Activated naive CD4-positive, alpha-beta T cell treated with anti-CD3 and anti-CD28 coated beads for 36 hours (primary cell): ENCODE measurements at regions of chr4 and their contacts with region 1.

Region 1: GRCh38 chr4:87220094-87220822 is at the start of gene KLHL8:
- DNase-seq: peak; percentile 85
- H3K4me3 Mint-ChIP-seq: peak within 1 kb of the TSS; percentile 84
- H3K27ac Mint-ChIP-seq: peak within 1 kb of the TSS; percentile 82
- H3K4me1 Mint-ChIP-seq: peaks cover 16% of the 10 kb centered on the region
- H3K27me3 Mint-ChIP-seq: no peaks in the 10 kb centered on the region
- total RNA-seq, gene KLHL8: 10.7 to 12.1 TPM

Region 2: GRCh38 chr4:87209696-87210095 is 10.6 kb before region 1 on chr4:
- CTCF ChIA-PET with region 1: interaction called, 3 read pairs
- intact Hi-C with region 1: loop called (anchors 1 kb)
- DNase-seq: peak; percentile 63
- H3K4me3 Mint-ChIP-seq: peak overlapping the region; percentile 42
- H3K27ac Mint-ChIP-seq: no peak overlapping the region
- H3K4me1 Mint-ChIP-seq: peaks cover 23% of the 10 kb centered on the region
- H3K27me3 Mint-ChIP-seq: no peaks in the 10 kb centered on the region

Region 3: DNA sequence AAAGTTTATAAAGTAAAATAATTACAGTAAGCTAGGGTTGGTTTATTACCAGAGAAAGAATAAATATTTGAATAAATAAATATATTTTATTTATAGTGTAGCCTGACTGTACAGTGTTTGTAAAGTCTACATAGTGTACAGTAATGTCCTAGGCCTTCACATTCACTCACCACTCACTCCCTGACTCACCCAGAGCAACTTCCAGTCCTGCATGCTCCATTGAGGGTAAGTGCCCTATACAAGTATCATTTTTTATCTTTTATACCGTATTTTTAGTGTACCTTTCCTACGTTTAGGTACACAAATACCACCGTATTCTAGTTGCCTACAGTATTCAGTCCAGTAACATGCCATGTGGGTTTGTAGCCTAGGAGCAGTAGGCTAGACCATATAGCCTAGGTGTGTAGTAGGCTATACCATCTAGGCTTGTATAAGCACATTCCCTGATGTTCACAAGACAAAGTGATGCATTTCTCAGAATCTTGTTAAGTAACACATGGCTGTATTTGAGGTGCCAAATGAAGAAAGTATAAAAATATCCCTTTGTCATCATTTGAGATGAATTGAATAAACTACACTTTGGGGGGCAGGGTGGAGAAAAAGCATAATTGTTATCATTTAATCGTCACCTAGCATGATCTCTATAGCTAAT is 14.9 kb after region 1 on chr4:
- CTCF ChIA-PET with region 1: interaction called, 11 read pairs
- intact Hi-C with region 1: loop called (anchors 1 kb)
- DNase-seq: no peak
- H3K4me3 Mint-ChIP-seq: no peak overlapping the region
- H3K27ac Mint-ChIP-seq: no peak overlapping the region
- H3K4me1 Mint-ChIP-seq: no peaks in the 10 kb centered on the region
- H3K27me3 Mint-ChIP-seq: peaks cover 2% of the 10 kb centered on the region

Region 4: DNA sequence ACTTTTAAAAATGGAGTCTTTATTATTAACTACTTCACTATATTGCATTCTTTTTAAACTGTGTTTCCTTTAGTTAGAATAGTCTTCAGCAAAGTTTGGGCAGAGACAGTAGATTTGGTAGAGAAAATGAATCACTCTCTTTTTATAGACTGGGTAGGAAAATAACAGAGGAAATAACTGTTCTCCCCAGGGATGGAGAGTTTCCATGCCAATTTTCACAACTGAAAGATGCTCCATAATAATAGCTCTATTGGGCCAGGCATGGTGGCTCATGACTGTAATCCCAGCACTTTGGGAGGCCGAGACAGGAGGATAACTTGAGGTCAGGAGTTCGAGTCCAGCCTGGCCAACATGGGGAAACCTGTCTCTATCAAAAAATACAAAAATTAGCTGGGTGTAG is 89.4 kb after region 1 on chr4:
- CTCF ChIA-PET with region 1: no interaction called
- intact Hi-C with region 1: no loop called
- DNase-seq: no peak
- H3K4me3 Mint-ChIP-seq: no peak overlapping the region
- H3K27ac Mint-ChIP-seq: no peak overlapping the region
- H3K4me1 Mint-ChIP-seq: no peaks in the 10 kb centered on the region
- H3K27me3 Mint-ChIP-seq: no peaks in the 10 kb centered on the region

Region 5: DNA sequence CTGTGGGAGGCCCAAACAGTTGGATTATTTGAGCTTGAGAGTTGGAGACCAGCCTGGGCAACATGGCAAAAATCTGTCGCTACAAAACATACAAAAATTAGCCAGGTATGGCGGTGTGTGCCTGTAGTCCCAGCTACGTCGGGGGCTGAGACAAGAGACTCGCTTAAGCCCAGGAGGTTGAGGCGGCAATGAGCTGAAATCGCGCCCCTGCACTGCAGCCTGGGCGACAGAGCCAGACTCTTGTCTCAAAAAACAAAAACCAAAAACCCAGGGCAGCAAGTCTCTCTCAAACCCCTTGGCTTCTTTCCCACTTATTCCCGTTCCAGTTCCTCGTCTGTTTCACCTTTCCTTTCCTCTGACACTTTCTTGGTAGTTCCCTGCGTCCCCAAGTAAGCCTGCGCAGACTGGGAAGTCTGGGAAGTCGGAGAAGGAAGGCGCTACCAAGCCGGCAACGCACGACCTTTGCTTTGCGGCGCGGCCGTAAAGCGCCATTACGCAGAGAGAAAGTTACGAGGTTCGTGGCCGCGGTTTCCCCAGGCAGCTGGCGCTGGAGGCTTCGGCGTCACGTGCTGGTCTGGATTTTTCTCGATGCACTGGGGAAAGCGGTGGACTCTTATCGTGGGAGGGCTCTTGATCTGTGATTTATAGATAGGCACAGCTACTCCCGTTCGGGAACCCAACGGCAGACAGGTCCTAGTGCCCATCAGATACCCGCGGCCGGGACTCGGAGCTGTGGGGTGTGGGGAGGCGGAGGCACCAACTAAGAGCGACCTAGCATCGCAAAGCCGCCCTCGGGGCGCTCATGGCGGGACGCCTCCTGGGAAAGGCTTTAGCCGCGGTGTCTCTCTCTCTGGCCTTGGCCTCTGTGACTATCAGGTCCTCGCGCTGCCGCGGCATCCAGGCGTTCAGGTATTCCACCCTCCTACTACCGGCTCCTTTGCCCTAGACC is 202.1 kb after region 1 on chr4 and contains the start of gene NUDT9:
- CTCF ChIA-PET with region 1: no interaction called
- intact Hi-C with region 1: loop called (anchors 2 kb)
- DNase-seq: peak; percentile 91
- H3K4me3 Mint-ChIP-seq: peak within 1 kb of the TSS; percentile 98
- H3K27ac Mint-ChIP-seq: peak within 1 kb of the TSS; percentile 97
- H3K4me1 Mint-ChIP-seq: peaks cover 32% of the 10 kb centered on the region
- H3K27me3 Mint-ChIP-seq: no peaks in the 10 kb centered on the region
- total RNA-seq, gene NUDT9: 12.1 to 13.4 TPM